Gastrocnemius medialis (tissue), 4 donors: ENCODE measurements at regions of chr6 and their contacts with region 1.

Region 1: GRCh38 chr6:105077596-105078385 is 102.0 kb downstream of the POPDC3 start:
- DNase-seq: no peak
- ATAC-seq: no peak
- H3K4me3 ChIP-seq: no peak overlapping the region
- H3K27ac ChIP-seq: no peak overlapping the region
- H3K4me1 ChIP-seq: no peaks in the 10 kb centered on the region
- H3K27me3 ChIP-seq: no peaks in the 10 kb centered on the region
- CTCF ChIP-seq: peak in 3 of 5 experiments; percentile 21 to 45 (median 29)
- POLR2A ChIP-seq: no peak

Region 2: GRCh38 chr6:104682722-104683643 is 394.8 kb before region 1 on chr6:
- in situ Hi-C with region 1: no loop called
- intact Hi-C with region 1: loop called (anchors 5 kb)
- DNase-seq: no peak
- ATAC-seq: no peak
- H3K4me3 ChIP-seq: no peak overlapping the region
- H3K27ac ChIP-seq: no peak overlapping the region
- H3K4me1 ChIP-seq: no peaks in the 10 kb centered on the region
- H3K27me3 ChIP-seq: no peaks in the 10 kb centered on the region
- CTCF ChIP-seq: peak; percentile 30 to 68 (median 46)
- POLR2A ChIP-seq: no peak

Region 3: DNA sequence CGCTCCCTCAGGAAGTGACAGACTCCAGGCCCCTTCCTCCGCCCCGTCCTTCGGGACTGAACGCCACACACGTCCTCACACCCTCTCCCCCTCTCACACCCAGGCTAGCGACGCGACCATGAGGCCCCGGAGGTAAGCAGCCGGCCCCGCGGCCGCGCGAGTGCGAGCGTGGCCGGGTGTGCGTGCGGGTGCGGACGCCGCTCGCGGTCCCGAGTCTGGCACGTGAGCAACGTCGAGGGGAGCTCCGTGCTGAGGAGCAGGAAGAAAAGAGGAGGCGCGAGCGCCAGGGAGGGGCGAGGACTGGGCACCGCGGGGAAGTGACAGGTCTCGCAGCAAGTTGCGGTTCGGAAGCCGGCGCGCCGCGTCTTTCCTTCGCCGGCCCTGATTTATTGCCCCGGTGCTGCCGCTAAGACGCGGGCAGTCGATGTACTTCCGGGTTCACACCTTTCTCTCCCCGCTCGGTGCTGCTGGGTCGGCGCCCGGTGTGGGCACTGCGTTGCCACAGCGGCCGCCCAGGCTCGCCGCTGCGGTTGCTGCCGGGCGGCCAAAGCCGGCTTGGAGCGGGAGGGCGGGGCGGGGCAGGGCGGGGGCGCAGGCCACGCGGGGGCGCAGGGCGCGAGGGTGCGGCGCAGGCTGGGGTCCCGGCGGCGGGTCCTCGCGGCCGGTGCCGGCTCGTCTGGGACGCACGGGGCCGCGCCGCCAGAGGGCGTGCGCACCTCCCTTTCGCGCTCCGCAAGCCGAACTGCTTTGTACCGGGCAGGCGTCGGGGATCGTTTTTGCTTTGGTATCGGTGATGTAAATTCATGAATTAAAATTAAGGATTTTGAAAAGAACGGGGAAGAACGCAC is 136.7 kb before region 1 on chr6:
- in situ Hi-C with region 1: no loop called
- intact Hi-C with region 1: loop called (anchors 5 kb)
- DNase-seq: no peak
- ATAC-seq: peak; percentile 56 to 61
- H3K4me3 ChIP-seq: peak overlapping the region; percentile 33 to 53 (median 48)
- H3K27ac ChIP-seq: no peak overlapping the region
- H3K4me1 ChIP-seq: peaks cover 0 to 3% of the 10 kb centered on the region in 2 donors
- H3K27me3 ChIP-seq: peaks cover 38 to 80% (median 57%) of the 10 kb centered on the region in 3 donors
- CTCF ChIP-seq: peak; percentile 5 to 51 (median 37)
- POLR2A ChIP-seq: no peak

Region 4: DNA sequence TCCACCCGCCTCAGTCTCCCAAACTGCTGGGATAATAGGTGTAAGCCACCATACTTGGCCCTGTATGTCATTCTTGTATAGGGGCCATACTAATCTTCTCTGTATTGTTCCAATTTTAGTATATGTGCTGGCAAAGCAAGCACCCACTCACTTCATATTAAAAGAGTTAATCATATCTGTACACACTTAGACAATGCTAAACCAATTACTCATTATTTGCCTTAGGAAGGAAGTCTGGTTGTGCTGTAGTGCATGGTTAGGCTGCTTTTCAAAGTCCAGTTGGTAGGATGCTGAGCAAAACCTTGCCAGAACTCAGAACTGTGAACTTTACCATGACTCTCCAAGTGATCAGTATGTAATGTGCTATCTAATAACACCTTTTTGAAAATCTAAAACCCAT is 32.3 kb before region 1 on chr6:
- in situ Hi-C with region 1: no loop called
- intact Hi-C with region 1: no loop called
- DNase-seq: no peak
- ATAC-seq: no peak
- H3K4me3 ChIP-seq: no peak overlapping the region
- H3K27ac ChIP-seq: no peak overlapping the region
- H3K4me1 ChIP-seq: no peaks in the 10 kb centered on the region
- H3K27me3 ChIP-seq: no peaks in the 10 kb centered on the region
- CTCF ChIP-seq: no peak
- POLR2A ChIP-seq: no peak